ENCODE measurements at regions of chr12 and their contacts with region 1.

Region 1: GRCh38 chr12:87848248-87848868 is 180.8 kb downstream of the C12orf50 start:
- DNase-seq: peak in 4 of 7 donors; percentile 10 to 24 (median 20)
- H3K4me3 ChIP-seq: no peak overlapping the region
- H3K27ac ChIP-seq: no peak overlapping the region
- H3K4me1 ChIP-seq: no peaks in the 10 kb centered on the region
- H3K27me3 ChIP-seq: no peaks in the 10 kb centered on the region
- CTCF ChIP-seq: peak; percentile 74 to 93 (median 79)
- POLR2A ChIP-seq: no peak

Region 2: DNA sequence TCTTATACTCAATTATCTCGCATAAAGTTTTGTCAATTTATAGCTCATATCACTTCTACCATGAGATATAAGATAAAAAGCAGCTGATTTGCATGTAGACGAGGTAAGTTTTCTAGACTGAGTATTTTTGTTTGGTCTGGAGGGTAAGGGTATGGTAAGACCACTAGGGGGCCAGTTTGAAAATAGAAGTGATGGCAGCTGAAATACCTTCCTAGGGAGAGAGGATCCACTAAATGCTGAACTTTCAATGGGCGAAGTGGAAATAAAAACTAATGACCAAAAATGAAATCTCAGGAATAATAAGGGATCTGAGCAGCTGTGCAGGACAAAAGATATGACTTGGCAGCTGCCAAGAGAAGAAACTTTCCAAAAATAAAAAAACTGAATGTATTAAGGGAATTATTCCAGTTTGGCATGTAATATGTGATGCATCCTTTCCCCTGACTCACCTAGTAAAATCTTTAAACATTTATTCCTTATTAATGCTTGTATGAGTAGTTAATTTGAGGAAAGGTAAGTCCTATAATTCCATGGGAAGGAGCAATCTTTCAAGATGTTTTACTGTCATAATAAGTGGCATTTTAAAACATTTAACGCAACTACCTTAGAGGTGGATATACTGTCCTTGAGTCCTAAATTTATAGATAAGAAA is 573.6 kb before region 1 on chr12:
- intact Hi-C with region 1: loop called in 1 of 2 experiments (anchors 10 kb)
- DNase-seq: no peak
- H3K4me3 ChIP-seq: no peak overlapping the region
- H3K27ac ChIP-seq: no peak overlapping the region
- H3K4me1 ChIP-seq: no peaks in the 10 kb centered on the region
- H3K27me3 ChIP-seq: no peaks in the 10 kb centered on the region
- CTCF ChIP-seq: peak; percentile 40 to 58 (median 48)
- POLR2A ChIP-seq: no peak